ENCODE measurements at regions of chr4 and their contacts with region 1.

Region 1: DNA sequence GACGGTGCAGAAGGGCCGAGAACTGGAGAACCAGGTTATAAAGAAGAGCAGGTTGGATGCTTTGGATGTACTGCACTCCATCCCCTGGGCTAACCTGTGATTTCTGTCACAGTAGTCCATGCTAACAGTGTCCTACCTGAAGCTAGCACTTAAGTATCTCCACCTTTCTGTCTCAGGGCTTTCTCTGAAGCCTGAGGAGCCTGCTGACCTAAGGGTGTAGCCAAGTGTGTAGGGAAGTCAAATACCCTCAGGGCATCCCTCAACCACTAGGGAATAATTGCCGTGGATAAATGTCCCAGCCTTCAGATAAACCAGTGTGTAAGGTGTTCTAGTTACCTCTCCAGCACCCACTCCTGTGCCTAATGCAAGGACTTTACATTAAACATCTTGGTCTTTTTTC is 1041.7 kb downstream of the PCDH7 start:
- DNase-seq: no peak
- H3K4me3 ChIP-seq: no peak overlapping the region
- H3K27ac ChIP-seq: no peak overlapping the region
- H3K4me1 ChIP-seq: no peaks in the 10 kb centered on the region
- H3K27me3 ChIP-seq: no peaks in the 10 kb centered on the region
- CTCF ChIP-seq: no peak

Region 2: DNA sequence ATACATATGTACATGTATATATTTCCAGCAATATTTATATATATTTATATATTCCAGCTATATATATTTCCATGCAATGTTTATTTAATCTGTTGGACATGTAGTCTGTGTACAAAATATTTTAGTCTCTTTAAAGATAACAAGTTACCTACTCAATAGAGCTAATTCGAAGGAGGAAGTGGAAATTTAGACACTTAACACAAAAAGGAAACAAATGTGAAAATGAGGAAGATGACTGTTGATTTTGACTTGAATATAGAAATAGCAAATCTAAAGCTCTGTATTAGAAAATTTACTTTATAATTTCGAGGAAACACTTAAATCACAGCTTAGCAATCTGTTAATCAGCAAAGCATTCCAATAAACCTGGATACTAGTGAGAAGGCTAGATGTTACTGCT is 22.7 kb after region 1 on chr4:
- CTCF ChIA-PET with region 1: no interaction called
- POLR2A ChIA-PET with region 1: interaction called, 11 read pairs
- intact Hi-C with region 1: no loop called
- DNase-seq: no peak
- H3K4me3 ChIP-seq: no peak overlapping the region
- H3K27ac ChIP-seq: no peak overlapping the region
- H3K4me1 ChIP-seq: no peaks in the 10 kb centered on the region
- H3K27me3 ChIP-seq: no peaks in the 10 kb centered on the region
- CTCF ChIP-seq: no peak